Activated B cell treated with CpG ODN at 0.5 μM for 24 hours (primary cell): ENCODE measurements at regions of chr9 and their contacts with region 1.

Region 1: DNA sequence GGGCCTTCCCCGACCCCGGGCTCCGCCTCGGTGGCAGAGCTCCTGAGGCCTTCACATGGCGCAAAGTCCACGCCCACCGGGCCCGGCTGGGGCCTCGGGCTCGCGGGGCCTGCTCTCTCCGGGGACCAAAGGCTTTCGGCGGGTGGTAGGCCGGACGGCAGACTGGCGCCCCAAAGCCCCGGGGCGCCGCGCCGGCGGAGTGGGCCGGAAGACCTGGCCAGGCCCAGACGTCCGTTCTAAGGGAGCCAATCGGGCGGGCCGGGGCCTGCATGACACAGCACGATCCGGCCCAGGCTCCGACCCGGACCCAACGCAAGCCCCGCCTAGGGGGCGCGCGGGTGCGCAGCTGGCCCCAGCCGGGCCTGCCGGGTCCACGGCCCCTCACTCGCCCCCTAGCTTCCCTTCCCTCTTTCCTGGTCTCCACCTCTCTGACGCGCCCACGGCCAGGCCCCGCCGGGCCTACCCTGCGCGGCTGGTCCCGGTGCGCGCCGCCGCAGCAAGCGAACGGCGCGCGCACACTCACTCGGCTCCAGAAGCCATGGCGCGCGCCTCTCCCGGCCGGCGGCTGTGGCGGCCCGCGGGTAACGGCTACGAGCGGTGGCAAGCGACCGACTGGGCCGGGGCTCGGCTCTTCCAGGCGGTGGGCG is 488 bp downstream of the VCP start:
- DNase-seq: peak; percentile 80
- ATAC-seq: peak; percentile 63
- H3K4me3 Mint-ChIP-seq: peak overlapping the region; percentile 89
- H3K27ac Mint-ChIP-seq: peak overlapping the region; percentile 93
- H3K4me1 Mint-ChIP-seq: peaks cover 51% of the 10 kb centered on the region
- H3K27me3 Mint-ChIP-seq: no peaks in the 10 kb centered on the region
- CTCF ChIP-seq: no peak

Region 2: GRCh38 chr9:34809504-34810186 is 262.3 kb before region 1 on chr9:
- CTCF ChIA-PET with region 1: no interaction called
- POLR2A ChIA-PET with region 1: no interaction called
- intact Hi-C with region 1: no loop called
- DNase-seq: no peak
- ATAC-seq: no peak
- H3K4me3 Mint-ChIP-seq: no peak overlapping the region
- H3K27ac Mint-ChIP-seq: no peak overlapping the region
- H3K4me1 Mint-ChIP-seq: no peaks in the 10 kb centered on the region
- H3K27me3 Mint-ChIP-seq: peaks cover 47% of the 10 kb centered on the region
- CTCF ChIP-seq: no peak

Region 3: DNA sequence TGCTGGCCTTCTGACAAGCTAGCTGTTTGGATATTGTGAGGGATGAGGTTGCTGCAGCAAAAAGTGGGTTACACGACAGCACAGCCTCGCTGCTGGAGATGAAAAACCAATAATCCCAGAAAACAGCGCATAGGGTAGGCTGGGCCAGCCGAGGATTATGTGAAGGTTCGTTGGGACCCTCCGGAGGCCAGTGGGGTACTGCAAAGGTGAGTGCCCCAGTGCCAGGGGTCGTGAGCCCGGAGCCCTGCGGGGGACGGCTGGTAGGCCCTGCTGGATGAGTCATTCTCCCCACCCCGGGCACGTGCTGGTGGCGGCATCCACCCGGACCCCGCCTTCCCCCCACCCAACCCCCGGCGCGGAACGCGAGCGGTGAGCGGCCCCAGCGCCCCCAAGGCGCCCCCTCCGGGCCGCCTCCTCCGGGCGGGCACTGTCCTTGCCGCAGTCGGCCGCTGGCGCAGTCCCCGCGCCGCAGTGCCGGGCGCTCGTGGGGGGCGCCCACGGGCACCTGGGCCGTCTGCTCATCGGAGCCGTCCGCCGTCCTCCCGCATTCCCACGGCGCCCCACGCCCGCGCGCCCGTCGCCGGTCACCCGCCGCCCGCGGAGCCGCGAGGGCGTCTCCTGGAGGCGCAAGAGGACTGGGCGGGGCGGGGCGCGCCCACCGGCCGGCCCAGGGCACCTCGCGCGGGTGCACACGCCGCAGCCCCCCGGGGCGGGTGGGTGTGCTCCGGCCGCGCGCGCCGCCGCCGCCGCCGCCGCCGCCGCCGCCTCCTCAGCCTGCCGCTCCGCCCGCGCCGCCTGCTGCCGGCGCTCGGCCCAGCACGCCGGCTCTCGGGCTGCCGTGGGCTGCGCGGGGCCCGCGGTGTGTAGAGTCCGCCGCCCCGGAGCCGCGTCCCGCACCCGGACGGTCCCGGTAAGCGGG is 114.2 kb before region 1 on chr9 and contains the start of gene PHF24:
- CTCF ChIA-PET with region 1: no interaction called
- POLR2A ChIA-PET with region 1: no interaction called
- intact Hi-C with region 1: no loop called
- DNase-seq: peak; percentile 32
- ATAC-seq: peak; percentile 77
- H3K4me3 Mint-ChIP-seq: peak within 1 kb of the TSS; percentile 62
- H3K27ac Mint-ChIP-seq: no peak within 1 kb of the TSS
- H3K4me1 Mint-ChIP-seq: peaks cover 6% of the 10 kb centered on the region
- H3K27me3 Mint-ChIP-seq: peaks cover 46% of the 10 kb centered on the region
- CTCF ChIP-seq: no peak
- total RNA-seq, gene PHF24: 0.13 TPM in 1 of 2 replicates, not detected in the other

Region 4: DNA sequence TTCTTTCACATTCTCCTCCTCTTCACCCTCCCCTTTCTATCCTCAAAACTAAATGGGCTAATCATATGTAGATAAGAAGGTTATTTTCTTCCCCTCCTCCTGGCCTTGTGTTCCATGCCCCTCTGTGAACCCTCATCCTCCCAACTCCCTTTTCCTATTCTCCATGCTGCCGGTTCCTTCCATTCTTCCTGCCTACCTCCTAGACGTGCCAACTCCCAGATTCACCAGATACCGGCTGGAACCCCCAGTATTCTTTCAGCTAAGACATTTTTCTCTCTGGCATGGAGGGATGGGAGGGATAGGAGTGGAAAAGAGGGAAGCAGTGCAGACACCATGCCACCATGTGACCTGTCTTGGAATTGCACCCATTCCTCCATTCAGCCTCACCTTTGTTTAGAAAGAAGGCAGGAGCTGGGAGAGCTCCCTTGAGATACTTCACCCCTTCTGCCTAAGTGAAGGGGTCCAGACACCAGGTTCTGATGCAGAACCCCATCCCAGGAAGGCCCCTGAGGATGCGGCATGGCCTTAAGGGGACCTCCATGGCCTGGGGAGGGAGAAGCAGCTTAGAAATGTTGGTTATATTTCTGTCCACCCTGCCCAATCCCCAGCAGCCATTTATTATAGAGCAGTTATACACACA is 77.6 kb before region 1 on chr9:
- CTCF ChIA-PET with region 1: no interaction called
- POLR2A ChIA-PET with region 1: interaction called, 10 read pairs
- intact Hi-C with region 1: loop called (anchors 1 kb)
- DNase-seq: no peak
- ATAC-seq: no peak
- H3K4me3 Mint-ChIP-seq: peak overlapping the region; percentile 46
- H3K27ac Mint-ChIP-seq: peak overlapping the region; percentile 78
- H3K4me1 Mint-ChIP-seq: peaks cover 47% of the 10 kb centered on the region
- H3K27me3 Mint-ChIP-seq: peaks cover 2% of the 10 kb centered on the region
- CTCF ChIP-seq: no peak

Region 5: GRCh38 chr9:35096035-35096849 is 24.3 kb after region 1 on chr9 and contains the start of gene PIGO:
- CTCF ChIA-PET with region 1: interaction called, 22 read pairs
- POLR2A ChIA-PET with region 1: interaction called, 30 read pairs
- intact Hi-C with region 1: loop called (anchors 1 kb)
- DNase-seq: peak; percentile 81
- ATAC-seq: peak; percentile 92
- H3K4me3 Mint-ChIP-seq: peak within 1 kb of the TSS; percentile 87
- H3K27ac Mint-ChIP-seq: peak within 1 kb of the TSS; percentile 93
- H3K4me1 Mint-ChIP-seq: peaks cover 30% of the 10 kb centered on the region
- H3K27me3 Mint-ChIP-seq: no peaks in the 10 kb centered on the region
- CTCF ChIP-seq: peak; percentile 60
- total RNA-seq, gene PIGO: 30.4 and 34.1 TPM in 2 replicates

Region 6: GRCh38 chr9:35111001-35111933 is 39.3 kb after region 1 on chr9:
- CTCF ChIA-PET with region 1: interaction called, 3 read pairs
- POLR2A ChIA-PET with region 1: interaction called, 47 read pairs
- intact Hi-C with region 1: loop called (anchors 1 kb)
- DNase-seq: peak; percentile 86
- ATAC-seq: peak; percentile 81
- H3K4me3 Mint-ChIP-seq: peak overlapping the region; percentile 83
- H3K27ac Mint-ChIP-seq: peak overlapping the region; percentile 88
- H3K4me1 Mint-ChIP-seq: peaks cover 62% of the 10 kb centered on the region
- H3K27me3 Mint-ChIP-seq: no peaks in the 10 kb centered on the region
- CTCF ChIP-seq: no peak

Region 7: GRCh38 chr9:35172878-35173277 is 100.9 kb after region 1 on chr9:
- CTCF ChIA-PET with region 1: no interaction called
- POLR2A ChIA-PET with region 1: no interaction called
- intact Hi-C with region 1: no loop called
- DNase-seq: no peak
- ATAC-seq: no peak
- H3K4me3 Mint-ChIP-seq: no peak overlapping the region
- H3K27ac Mint-ChIP-seq: no peak overlapping the region
- H3K4me1 Mint-ChIP-seq: no peaks in the 10 kb centered on the region
- H3K27me3 Mint-ChIP-seq: peaks cover 2% of the 10 kb centered on the region
- CTCF ChIP-seq: no peak